ENCODE measurements at regions of chr11 and their contacts with region 1.

Region 1: DNA sequence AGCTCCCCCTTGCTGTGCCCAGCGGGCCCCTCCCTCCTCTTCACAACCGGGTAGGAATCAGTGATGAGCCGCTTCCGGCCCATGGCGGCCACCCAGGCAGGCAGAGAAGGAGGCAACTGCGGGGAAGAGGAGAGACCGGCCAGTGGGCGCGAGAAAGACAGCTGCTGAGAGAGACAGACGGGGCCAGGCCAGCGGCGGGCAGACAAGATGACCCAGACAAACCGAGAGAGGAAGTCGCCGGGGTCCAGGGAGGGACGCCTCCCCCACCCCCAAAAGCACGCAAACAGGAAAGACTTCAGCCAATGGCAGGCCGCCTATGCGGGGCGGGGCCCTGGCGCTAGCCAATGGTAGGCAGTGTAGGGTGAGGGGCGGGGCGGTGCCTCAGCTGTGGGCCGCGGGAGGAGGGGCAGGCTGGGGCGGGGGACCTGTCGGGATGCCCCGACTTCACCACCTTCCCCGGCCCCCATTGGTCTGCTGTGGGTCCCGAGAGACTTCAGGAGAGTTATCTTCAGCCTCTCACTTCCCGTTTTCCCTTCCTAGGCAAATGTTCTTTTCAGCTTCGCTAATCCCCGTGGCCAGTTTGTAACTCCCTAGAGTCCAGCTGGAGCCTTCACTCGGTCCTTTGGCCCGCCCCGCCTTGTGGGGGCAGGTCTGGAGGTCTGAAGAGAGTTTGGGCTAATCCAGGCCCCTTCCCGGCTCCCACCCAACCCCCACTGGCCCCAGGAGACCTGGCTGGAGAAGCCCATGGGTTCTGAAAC is at the start of gene POLD4:
- DNase-seq: peak; percentile 98
- H3K4me3 ChIP-seq: peak within 1 kb of the TSS; percentile 76 to 81
- H3K27ac ChIP-seq: peak within 1 kb of the TSS; percentile 99 to 100
- H3K4me1 ChIP-seq: peaks cover 25% of the 10 kb centered on the region
- H3K27me3 ChIP-seq: no peaks in the 10 kb centered on the region
- CTCF ChIP-seq: no peak
- POLR2A ChIP-seq: peak; percentile 95
- total RNA-seq, gene POLD4: 95.1 to 145 TPM

Region 2: GRCh38 chr11:67277231-67277961 is 76.1 kb before region 1 on chr11:
- intact Hi-C with region 1: no loop called
- DNase-seq: peak; percentile 85
- H3K4me3 ChIP-seq: peak overlapping the region in 1 of 2 donors; percentile 19
- H3K27ac ChIP-seq: peak overlapping the region; percentile 82 to 83
- H3K4me1 ChIP-seq: peaks cover 49% of the 10 kb centered on the region
- H3K27me3 ChIP-seq: no peaks in the 10 kb centered on the region
- CTCF ChIP-seq: no peak
- POLR2A ChIP-seq: peak; percentile 53

Region 3: GRCh38 chr11:67373925-67374618 is 20.6 kb after region 1 on chr11:
- intact Hi-C with region 1: loop called (anchors 2 kb)
- DNase-seq: peak; percentile 75
- H3K4me3 ChIP-seq: peak overlapping the region; percentile 70 to 81
- H3K27ac ChIP-seq: peak overlapping the region; percentile 86 to 89
- H3K4me1 ChIP-seq: peaks cover 19% of the 10 kb centered on the region
- H3K27me3 ChIP-seq: no peaks in the 10 kb centered on the region
- CTCF ChIP-seq: peak in 3 of 4 experiments; percentile 42 to 79 (median 68)
- POLR2A ChIP-seq: peak; percentile 37

Region 4: DNA sequence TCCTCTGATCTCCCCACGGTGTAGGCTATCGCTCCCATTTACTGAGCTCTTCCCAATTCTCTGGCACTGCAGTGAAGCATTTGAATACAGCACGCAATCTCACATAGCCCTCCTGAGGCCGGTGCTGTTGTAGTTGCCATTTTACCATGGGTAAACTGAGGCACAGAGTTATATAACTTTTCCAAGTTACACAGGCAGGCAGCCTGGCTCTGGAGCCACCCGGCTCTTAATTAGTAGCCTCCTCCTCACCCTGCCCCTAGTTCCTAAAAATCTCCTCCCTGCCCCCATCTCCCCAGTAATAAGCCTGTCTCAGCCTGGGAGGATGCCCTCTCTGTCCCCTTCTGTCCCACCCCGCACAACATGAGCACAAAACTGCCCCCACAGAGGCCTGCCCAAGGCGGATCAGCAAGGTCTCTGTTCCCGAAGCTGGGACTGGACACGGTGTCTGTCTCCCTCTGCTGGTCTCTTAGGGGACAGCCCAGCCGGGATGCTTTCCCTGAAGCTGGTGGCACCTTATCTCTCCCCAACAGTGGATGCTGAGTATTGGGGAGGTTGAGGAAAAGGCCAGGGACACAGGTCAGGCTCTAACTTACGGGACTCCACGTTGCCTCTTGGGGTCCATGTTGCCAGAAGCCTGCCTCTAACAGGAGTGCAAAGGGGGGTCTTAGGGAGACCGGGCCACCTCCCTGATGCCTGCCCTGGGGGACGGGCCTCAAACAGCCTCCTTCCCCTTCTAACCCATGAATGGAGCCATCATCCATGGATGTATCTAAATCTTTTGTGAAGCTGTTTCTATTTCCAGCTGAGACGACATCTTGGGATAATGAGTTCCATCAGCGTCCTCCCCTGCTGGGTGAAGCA is 29.0 kb after region 1 on chr11:
- intact Hi-C with region 1: loop called (anchors 1 kb)
- DNase-seq: peak; percentile 79
- H3K4me3 ChIP-seq: no peak overlapping the region
- H3K27ac ChIP-seq: no peak overlapping the region
- H3K4me1 ChIP-seq: peaks cover 3% of the 10 kb centered on the region
- H3K27me3 ChIP-seq: no peaks in the 10 kb centered on the region
- CTCF ChIP-seq: peak; percentile 83 to 99 (median 94)
- POLR2A ChIP-seq: no peak

Region 5: GRCh38 chr11:67507864-67508485 is 154.5 kb after region 1 on chr11 and contains the start of gene CDK2AP2:
- intact Hi-C with region 1: loop called (anchors 10 kb)
- DNase-seq: peak; percentile 99
- H3K4me3 ChIP-seq: peak within 1 kb of the TSS; percentile 71 to 74
- H3K27ac ChIP-seq: peak within 1 kb of the TSS; percentile 97 to 98
- H3K4me1 ChIP-seq: peaks cover 9% of the 10 kb centered on the region
- H3K27me3 ChIP-seq: no peaks in the 10 kb centered on the region
- CTCF ChIP-seq: peak in 1 of 4 experiments; percentile 8
- POLR2A ChIP-seq: peak; percentile 93
- total RNA-seq, gene CDK2AP2: 57.1 to 91.9 TPM

Measured in prostate gland (tissue), 2 donors.